ENCODE measurements at regions of chr11 and their contacts with region 1.

Region 1: GRCh38 chr11:8813658-8814057 is 97.3 kb upstream of the AKIP1 start:
- DNase-seq: peak; percentile 59 to 67 (median 66)
- ATAC-seq: peak; percentile 63 to 76 (median 72)
- H3K4me3 ChIP-seq: no peak overlapping the region
- H3K27ac ChIP-seq: no peak overlapping the region
- H3K4me1 ChIP-seq: peaks cover 0 to 18% (median 0%) of the 10 kb centered on the region in 4 donors
- H3K27me3 ChIP-seq: no peaks in the 10 kb centered on the region
- CTCF ChIP-seq: peak; percentile 70 to 85 (median 84)
- POLR2A ChIP-seq: no peak

Region 2: GRCh38 chr11:8688414-8689362 is 125.0 kb before region 1 on chr11:
- intact Hi-C with region 1: loop called in 1 of 2 experiments (anchors 10 kb)
- DNase-seq: peak; percentile 96 to 97 (median 97)
- ATAC-seq: peak; percentile 97 to 99 (median 98)
- H3K4me3 ChIP-seq: peak overlapping the region; percentile 57 to 77 (median 75)
- H3K27ac ChIP-seq: peak overlapping the region; percentile 23 to 78 (median 57)
- H3K4me1 ChIP-seq: peaks cover 0 to 33% (median 12%) of the 10 kb centered on the region in 4 donors
- H3K27me3 ChIP-seq: no peaks in the 10 kb centered on the region
- CTCF ChIP-seq: peak in 3 of 4 donors; percentile 15 to 39 (median 35)
- POLR2A ChIP-seq: peak; percentile 90

Measured in right lobe of liver (tissue), 6 donors.